HepG2 (cell line): ENCODE measurements at regions of chr10 and their contacts with region 1.

Region 1: DNA sequence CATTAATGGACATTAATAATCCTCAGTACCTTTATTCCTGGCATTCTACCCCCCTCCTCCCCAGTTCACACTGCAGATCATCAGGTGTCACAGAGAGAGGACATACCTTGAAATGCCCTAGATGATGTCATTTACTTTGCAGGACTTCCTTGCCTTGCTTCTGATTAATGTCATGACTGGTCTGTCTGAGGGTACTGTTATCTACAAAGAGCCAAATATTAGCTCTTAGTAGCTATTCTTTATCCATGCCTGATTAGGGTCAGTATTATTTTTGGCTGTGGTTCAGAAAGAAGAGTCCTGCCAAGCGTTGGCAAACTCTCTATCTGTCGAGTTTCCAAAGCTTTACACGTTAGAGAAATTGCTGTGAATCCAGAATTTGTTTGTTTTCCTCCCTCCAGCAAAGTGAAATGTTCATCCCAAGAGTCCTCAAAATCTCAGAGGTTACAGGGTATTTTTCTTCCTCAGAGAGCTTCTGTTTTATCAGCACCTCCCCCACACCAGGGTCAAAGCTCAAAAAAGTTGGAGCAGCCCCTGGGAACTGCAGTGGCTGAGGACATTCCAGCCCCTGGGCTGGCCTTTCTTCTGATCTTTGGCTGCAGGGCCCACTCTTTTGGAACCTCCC is 12.6 kb downstream of the SCD start:
- DNase-seq: peak; percentile 79
- ATAC-seq: peak; percentile 56
- H3K4me3 ChIP-seq: no peak overlapping the region; a peak in 1 of 6 replicates
- H3K27ac ChIP-seq: peak overlapping the region; percentile 63
- H3K4me1 ChIP-seq: peaks cover 100% of the 10 kb centered on the region
- H3K27me3 ChIP-seq: no peaks in the 10 kb centered on the region
- CTCF ChIP-seq: no peak
- EP300 ChIP-seq: peak in 1 of 2 experiments; percentile 74; a peak in 1 of 4 replicates
- POLR2A ChIP-seq: peak in 1 of 2 experiments; percentile 1; a peak in 1 of 4 replicates
- RAD21 ChIP-seq: 0 out of 2 replicates have a peak, but pooled peaks have one; percentile 20

Region 2: GRCh38 chr10:100204370-100204769 is 155.3 kb before region 1 on chr10:
- CTCF ChIA-PET with region 1: no interaction called
- POLR2A ChIA-PET with region 1: no interaction called
- in situ Hi-C with region 1: no loop called
- intact Hi-C with region 1: no loop called
- DNase-seq: no peak
- ATAC-seq: no peak
- H3K4me3 ChIP-seq: no peak overlapping the region
- H3K27ac ChIP-seq: no peak overlapping the region
- H3K4me1 ChIP-seq: no peaks in the 10 kb centered on the region
- H3K27me3 ChIP-seq: no peaks in the 10 kb centered on the region
- CTCF ChIP-seq: no peak
- EP300 ChIP-seq: no peak
- POLR2A ChIP-seq: no peak
- RAD21 ChIP-seq: no peak

Region 3: GRCh38 chr10:100346765-100347567 is 12.7 kb before region 1 on chr10 and contains the start of gene SCD:
- CTCF ChIA-PET with region 1: interaction called, 3 read pairs
- POLR2A ChIA-PET with region 1: interaction called, 72 read pairs
- in situ Hi-C with region 1: no loop called
- intact Hi-C with region 1: no loop called
- DNase-seq: peak; percentile 92
- ATAC-seq: peak; percentile 86
- H3K4me3 ChIP-seq: peak within 1 kb of the TSS; percentile 95 to 99 (median 95)
- H3K27ac ChIP-seq: peak within 1 kb of the TSS; percentile 82
- H3K4me1 ChIP-seq: peaks cover 63% of the 10 kb centered on the region
- H3K27me3 ChIP-seq: no peaks in the 10 kb centered on the region; a peak in 1 of 5 replicates
- CTCF ChIP-seq: peak; percentile 18; the same call in 1 of the 2 replicates
- EP300 ChIP-seq: peak in 1 of 2 experiments; percentile 38; a peak in 1 of 4 replicates
- POLR2A ChIP-seq: peak; percentile 91 to 92
- RAD21 ChIP-seq: no peak; the same call in 1 of the 2 replicates
- total RNA-seq, gene SCD: 338 and 492 TPM in 2 replicates